ENCODE measurements at regions of chr4 and their contacts with region 1.

Region 1: GRCh38 chr4:6720202-6720699 is 4.3 kb downstream of the BLOC1S4 start:
- DNase-seq: peak; percentile 82 to 90 (median 84)
- ATAC-seq: peak; percentile 60
- H3K4me3 ChIP-seq: no peak overlapping the region
- H3K4me1 ChIP-seq: peaks cover 17% of the 10 kb centered on the region
- CTCF ChIP-seq: peak; percentile 86

Region 2: DNA sequence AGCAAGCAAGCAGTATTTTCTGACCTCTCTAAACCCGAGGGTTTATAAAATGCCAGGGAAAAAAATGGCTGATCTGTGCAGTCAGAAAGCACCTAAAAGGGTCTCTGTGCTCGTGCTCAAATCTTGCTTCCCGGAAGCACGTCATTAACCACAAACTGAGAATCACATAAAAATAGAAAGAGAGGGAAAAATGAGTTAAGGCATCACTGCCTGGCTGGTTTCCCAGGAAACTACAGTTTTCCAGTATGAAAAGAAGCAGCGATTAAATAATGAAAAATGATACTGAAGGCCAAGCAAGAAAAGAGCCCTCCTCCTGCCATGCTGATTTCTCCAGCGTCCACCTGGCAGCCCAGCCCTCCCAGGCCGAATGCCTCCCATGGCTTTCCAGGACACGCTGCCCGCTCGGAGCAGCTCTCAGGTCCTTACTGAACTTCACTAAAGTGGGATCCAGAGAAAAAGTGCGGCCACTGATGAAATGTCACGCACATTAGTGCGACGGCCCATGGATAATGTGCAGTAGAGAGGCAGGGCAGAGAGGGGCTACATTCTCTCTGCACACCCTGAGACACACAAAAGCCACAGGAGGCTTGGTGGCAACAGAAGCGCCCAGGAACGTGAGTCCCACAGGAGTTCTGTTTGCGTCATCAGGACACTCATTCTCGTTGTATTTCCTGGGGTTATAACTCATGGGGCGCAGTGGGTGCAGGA is 370.2 kb before region 1 on chr4:
- intact Hi-C with region 1: no loop called
- DNase-seq: peak in 1 of 3 donors; percentile 19
- ATAC-seq: no peak
- H3K4me3 ChIP-seq: no peak overlapping the region
- H3K4me1 ChIP-seq: no peaks in the 10 kb centered on the region
- CTCF ChIP-seq: no peak

Region 3: DNA sequence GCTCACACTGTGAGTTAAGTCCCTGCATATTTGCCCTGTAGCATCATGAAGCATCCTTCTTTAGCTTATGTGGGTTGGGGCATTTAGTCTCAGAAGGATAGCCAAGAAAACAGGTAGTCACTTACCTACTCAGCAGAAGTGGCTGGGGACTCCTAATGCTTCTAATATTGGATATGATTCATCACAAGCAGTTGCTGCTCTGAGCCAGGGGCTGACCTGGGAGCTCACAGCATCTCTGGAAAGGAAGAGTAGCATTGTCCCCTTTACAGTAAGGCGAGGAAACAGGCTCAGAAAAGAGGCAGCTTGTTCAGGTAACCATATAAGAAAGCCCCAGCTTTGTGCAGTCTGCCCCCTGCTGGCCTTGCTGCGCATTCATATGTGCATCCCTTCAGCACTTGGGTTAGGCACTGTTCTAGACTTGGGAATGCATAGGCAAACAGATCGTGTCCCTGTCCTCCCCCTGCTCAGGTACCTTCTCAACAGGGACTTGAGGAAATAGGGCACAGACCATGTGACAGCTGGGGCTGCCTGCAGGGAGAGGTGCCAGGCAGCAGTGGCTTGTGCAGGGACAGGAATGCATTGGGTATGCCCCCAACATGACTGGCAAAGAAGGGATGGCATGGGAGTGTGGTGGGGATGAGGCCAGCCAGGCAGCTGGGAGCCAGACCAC is 153.7 kb after region 1 on chr4:
- intact Hi-C with region 1: loop called (anchors 2 to 5 kb)
- DNase-seq: peak; percentile 73 to 89 (median 84)
- ATAC-seq: peak; percentile 87
- H3K4me3 ChIP-seq: no peak overlapping the region
- H3K4me1 ChIP-seq: no peaks in the 10 kb centered on the region
- CTCF ChIP-seq: peak; percentile 61

Region 4: DNA sequence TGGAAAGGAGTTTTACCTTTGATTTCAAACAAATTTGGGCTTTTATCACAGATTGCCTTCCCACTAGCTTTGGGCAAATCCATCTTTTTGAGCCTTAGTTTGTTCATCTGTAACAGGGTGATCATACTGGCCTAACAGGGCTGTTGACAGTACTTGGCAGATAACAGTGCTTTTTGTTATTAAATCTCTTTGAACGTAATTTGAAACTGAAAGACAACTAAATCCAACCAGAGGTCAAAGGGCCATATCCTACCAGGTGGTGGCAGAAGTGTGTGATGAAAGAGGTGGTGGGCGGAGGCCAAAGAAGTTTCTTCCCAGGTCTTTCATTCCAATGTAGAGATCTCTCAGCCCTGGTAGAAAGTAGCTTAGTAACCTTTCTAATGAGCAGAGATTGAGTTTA is 287.7 kb after region 1 on chr4:
- intact Hi-C with region 1: no loop called
- DNase-seq: no peak
- ATAC-seq: peak; percentile 60
- H3K4me3 ChIP-seq: no peak overlapping the region
- H3K4me1 ChIP-seq: no peaks in the 10 kb centered on the region
- CTCF ChIP-seq: no peak

Region 5: GRCh38 chr4:7070729-7071511 is 350.7 kb after region 1 on chr4:
- intact Hi-C with region 1: loop called in 1 of 2 experiments (anchors 5 kb)
- DNase-seq: peak; percentile 82 to 95 (median 94)
- ATAC-seq: peak; percentile 52
- H3K4me3 ChIP-seq: no peak overlapping the region
- H3K4me1 ChIP-seq: peaks cover 14% of the 10 kb centered on the region
- CTCF ChIP-seq: peak; percentile 98

Region 6: GRCh38 chr4:7342223-7343080 is 622.2 kb after region 1 on chr4:
- intact Hi-C with region 1: no loop called
- DNase-seq: no peak
- ATAC-seq: no peak
- H3K4me3 ChIP-seq: no peak overlapping the region
- H3K4me1 ChIP-seq: no peaks in the 10 kb centered on the region
- CTCF ChIP-seq: no peak

Measured in mucosa of descending colon (tissue), 3 donors.